HepG2 (cell line): ENCODE measurements at regions of chr12 and their contacts with region 1.

Region 1: GRCh38 chr12:56987551-56988053 is 18.7 kb downstream of the ZBTB39 start:
- DNase-seq: peak; percentile 46
- ATAC-seq: peak; percentile 85
- H3K4me3 ChIP-seq: no peak overlapping the region
- H3K27ac ChIP-seq: no peak overlapping the region
- H3K4me1 ChIP-seq: peaks cover 10% of the 10 kb centered on the region; the same call in 1 of the 2 replicates
- H3K27me3 ChIP-seq: no peaks in the 10 kb centered on the region; a peak in 1 of 5 replicates
- CTCF ChIP-seq: peak; percentile 95
- EP300 ChIP-seq: no peak
- POLR2A ChIP-seq: no peak
- RAD21 ChIP-seq: peak; percentile 94

Region 2: DNA sequence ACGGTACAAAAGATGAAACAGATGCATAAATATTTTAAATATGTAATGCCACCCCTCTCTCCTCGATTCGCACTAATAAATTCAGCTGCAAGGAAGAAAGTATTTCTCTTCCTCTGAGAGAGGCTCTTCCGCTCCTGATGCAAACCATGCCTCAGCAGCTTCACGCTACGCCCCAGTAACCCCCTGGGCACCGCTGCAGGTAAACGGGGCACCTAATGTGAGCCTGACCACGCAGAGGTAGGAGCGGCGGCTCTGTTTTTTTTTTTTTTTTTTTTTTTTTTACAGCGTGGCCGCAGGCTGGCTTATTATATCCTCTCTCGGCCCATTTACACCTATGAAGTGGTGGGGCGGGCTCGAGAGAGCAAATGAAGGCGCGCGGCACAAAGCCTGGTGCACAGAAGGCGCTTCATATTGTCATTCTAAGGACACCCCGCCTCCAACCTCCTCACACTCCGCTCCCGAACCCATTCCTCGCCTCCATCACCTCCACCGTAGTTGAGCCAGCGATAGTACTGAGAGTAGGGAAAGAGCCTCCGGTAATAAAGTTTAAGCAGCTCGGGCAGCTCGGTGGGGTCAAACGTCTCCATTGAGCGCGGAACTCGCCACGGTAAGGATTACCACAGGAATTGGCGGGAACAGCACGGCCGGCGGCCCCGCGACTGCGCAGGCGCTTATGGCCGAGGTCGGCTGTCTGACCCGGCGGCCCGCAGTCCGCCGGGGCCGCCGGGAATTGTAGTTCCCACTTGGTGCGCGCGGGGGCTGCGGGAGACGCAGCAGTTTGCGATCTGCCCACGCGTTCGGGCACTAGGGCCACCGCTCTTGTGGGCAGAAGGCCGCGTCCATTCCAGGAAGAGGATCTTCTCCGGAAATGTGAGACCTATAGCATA is 235.6 kb before region 1 on chr12 and contains the start of gene PRIM1:
- CTCF ChIA-PET with region 1: interaction called, 13 read pairs
- POLR2A ChIA-PET with region 1: no interaction called
- in situ Hi-C with region 1: loop called (anchors 5 kb)
- intact Hi-C with region 1: no loop called
- DNase-seq: peak; percentile 65
- ATAC-seq: peak; percentile 92
- H3K4me3 ChIP-seq: peak within 1 kb of the TSS; percentile 63 to 86 (median 85)
- H3K27ac ChIP-seq: peak within 1 kb of the TSS; percentile 83
- H3K4me1 ChIP-seq: peaks cover 30% of the 10 kb centered on the region
- H3K27me3 ChIP-seq: no peaks in the 10 kb centered on the region
- CTCF ChIP-seq: no peak
- EP300 ChIP-seq: 0 out of 4 replicates have a peak, but pooled peaks of 1 of the 2 experiments have one; percentile 19
- POLR2A ChIP-seq: peak; percentile 72 to 73
- RAD21 ChIP-seq: peak; percentile 21; the same call in 1 of the 2 replicates
- total RNA-seq, gene PRIM1: 47.3 and 67.0 TPM in 2 replicates

Region 3: GRCh38 chr12:56763753-56764657 is 223.6 kb before region 1 on chr12:
- CTCF ChIA-PET with region 1: interaction called, 5 read pairs
- POLR2A ChIA-PET with region 1: interaction called, 4 read pairs
- in situ Hi-C with region 1: loop called (anchors 5 kb)
- intact Hi-C with region 1: loop called (anchors 5 kb)
- DNase-seq: no peak
- ATAC-seq: no peak
- H3K4me3 ChIP-seq: no peak overlapping the region
- H3K27ac ChIP-seq: no peak overlapping the region
- H3K4me1 ChIP-seq: peaks cover 67% of the 10 kb centered on the region
- H3K27me3 ChIP-seq: no peaks in the 10 kb centered on the region
- CTCF ChIP-seq: no peak
- EP300 ChIP-seq: no peak
- POLR2A ChIP-seq: no peak
- RAD21 ChIP-seq: no peak

Region 4: DNA sequence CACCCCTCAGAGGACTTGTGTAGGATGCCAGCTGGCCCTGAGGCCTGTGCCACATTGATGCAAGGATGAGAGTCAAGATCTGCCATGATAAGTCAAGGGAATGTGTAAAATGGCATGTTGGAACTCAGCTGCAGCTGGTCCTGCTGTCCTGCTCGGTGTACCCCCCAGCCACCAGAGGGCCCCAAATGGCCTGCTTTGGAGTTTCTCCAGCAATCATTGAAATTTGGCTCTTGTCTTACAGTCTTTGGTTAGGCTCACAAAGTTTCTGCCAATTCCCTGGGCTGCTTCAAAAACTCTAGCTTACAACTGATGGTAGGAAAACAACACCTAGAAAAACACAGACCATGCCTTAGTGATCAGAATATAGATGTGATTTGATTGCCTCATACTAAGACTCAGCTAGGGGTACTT is 147.7 kb before region 1 on chr12:
- CTCF ChIA-PET with region 1: interaction called, 37 read pairs
- POLR2A ChIA-PET with region 1: interaction called, 3 read pairs
- in situ Hi-C with region 1: loop called (anchors 5 kb)
- intact Hi-C with region 1: loop called (anchors 1 kb)
- DNase-seq: peak; percentile 41
- ATAC-seq: peak; percentile 86
- H3K4me3 ChIP-seq: no peak overlapping the region
- H3K27ac ChIP-seq: no peak overlapping the region
- H3K4me1 ChIP-seq: peaks cover 14% of the 10 kb centered on the region; the same call in 1 of the 2 replicates
- H3K27me3 ChIP-seq: peaks cover 0 to 4% of the 10 kb centered on the region in 2 experiments; a peak in 2 of 5 replicates
- CTCF ChIP-seq: peak; percentile 90
- EP300 ChIP-seq: no peak
- POLR2A ChIP-seq: no peak
- RAD21 ChIP-seq: peak; percentile 89

Region 5: DNA sequence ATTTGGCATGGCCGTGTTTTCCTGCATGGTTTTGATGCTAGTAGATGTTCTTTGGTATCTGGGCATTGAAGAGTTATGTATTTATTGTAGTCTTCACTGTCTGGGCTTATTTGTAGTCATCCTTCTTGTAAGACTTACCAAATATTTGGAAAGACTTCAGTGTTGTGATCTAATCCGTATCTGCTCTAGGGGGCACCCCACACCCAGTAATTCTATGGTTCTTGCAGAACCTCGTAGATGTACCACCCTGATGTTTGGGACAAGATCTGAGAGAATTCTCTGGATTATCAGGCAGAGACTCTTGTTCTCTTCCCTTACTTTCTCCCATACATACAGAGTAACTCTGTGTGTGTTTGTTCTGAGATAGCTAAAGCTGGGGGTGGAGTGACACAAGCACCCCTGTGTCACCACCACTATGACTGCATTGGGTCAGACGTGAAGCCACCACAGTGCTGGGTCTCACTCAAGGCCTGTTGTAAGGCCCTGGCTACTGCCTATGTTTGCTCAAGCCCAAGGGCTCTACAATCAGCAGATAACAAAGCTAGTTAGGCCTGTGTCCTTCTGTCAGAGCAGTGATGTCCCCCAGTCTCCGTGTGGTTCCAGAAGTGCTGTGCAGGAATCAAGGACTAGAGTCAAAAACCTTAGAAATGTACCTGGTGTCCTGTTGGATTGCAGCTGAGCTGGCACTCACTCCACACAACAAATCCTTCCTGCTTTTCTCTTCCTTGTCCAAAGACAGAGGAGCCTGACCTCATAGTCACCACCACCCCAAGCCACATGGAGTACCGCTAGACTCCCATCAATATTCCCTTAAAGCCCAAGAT is 39.8 kb before region 1 on chr12:
- CTCF ChIA-PET with region 1: interaction called, 3 read pairs
- POLR2A ChIA-PET with region 1: no interaction called
- in situ Hi-C with region 1: loop called (anchors 5 kb)
- intact Hi-C with region 1: loop called (anchors 1 kb)
- DNase-seq: peak; percentile 39
- ATAC-seq: peak; percentile 93
- H3K4me3 ChIP-seq: no peak overlapping the region
- H3K27ac ChIP-seq: no peak overlapping the region
- H3K4me1 ChIP-seq: peaks cover 16% of the 10 kb centered on the region
- H3K27me3 ChIP-seq: no peaks in the 10 kb centered on the region
- CTCF ChIP-seq: peak; percentile 62
- EP300 ChIP-seq: no peak
- POLR2A ChIP-seq: no peak
- RAD21 ChIP-seq: peak; percentile 25; the same call in 1 of the 2 replicates